IMR-90 (cell line): ENCODE measurements at regions of chrX and their contacts with region 1.

Region 1: GRCh38 chrX:8364369-8365141 is 100.1 kb upstream of the VCX3B start:
- DNase-seq: no peak
- ATAC-seq: no peak
- H3K4me3 ChIP-seq: no peak overlapping the region
- H3K27ac ChIP-seq: no peak overlapping the region
- H3K4me1 ChIP-seq: no peaks in the 10 kb centered on the region
- H3K27me3 ChIP-seq: no peaks in the 10 kb centered on the region
- CTCF ChIP-seq: no peak
- POLR2A ChIP-seq: no peak
- RAD21 ChIP-seq: no peak

Region 2: GRCh38 chrX:8254386-8254785 is 110.2 kb before region 1 on chrX:
- CTCF ChIA-PET with region 1: no interaction called
- POLR2A ChIA-PET with region 1: no interaction called
- dilution Hi-C with region 1: no loop called
- in situ Hi-C with region 1: no loop called
- intact Hi-C with region 1: no loop called
- DNase-seq: no peak
- ATAC-seq: no peak
- H3K4me3 ChIP-seq: no peak overlapping the region
- H3K27ac ChIP-seq: no peak overlapping the region
- H3K4me1 ChIP-seq: no peaks in the 10 kb centered on the region
- H3K27me3 ChIP-seq: no peaks in the 10 kb centered on the region
- CTCF ChIP-seq: no peak
- POLR2A ChIP-seq: no peak
- RAD21 ChIP-seq: no peak

Region 3: DNA sequence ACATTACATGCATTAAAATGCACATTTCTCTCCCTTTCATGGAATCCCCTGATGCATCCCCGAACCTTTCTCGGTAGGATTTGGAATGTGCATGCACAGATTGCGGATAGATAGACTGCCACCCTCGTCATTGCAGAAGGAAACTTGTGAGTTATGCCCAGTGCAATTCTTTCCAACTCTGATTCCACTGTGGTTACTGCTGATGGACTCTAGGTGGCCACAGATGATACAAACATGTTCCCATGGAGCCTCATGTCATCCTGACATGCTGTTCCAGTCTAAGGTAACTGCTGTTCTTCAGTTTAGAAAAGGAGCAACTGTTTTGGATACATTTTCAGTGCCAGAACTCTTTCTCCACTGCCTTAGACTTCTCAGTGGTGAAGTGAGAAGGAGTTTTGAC is 91.0 kb after region 1 on chrX:
- CTCF ChIA-PET with region 1: no interaction called
- POLR2A ChIA-PET with region 1: no interaction called
- dilution Hi-C with region 1: no loop called
- in situ Hi-C with region 1: loop called (anchors 25 kb)
- intact Hi-C with region 1: no loop called
- DNase-seq: no peak
- ATAC-seq: no peak
- H3K4me3 ChIP-seq: no peak overlapping the region
- H3K27ac ChIP-seq: no peak overlapping the region
- H3K4me1 ChIP-seq: no peaks in the 10 kb centered on the region
- H3K27me3 ChIP-seq: no peaks in the 10 kb centered on the region
- CTCF ChIP-seq: no peak
- POLR2A ChIP-seq: no peak
- RAD21 ChIP-seq: no peak